ENCODE measurements at regions of chr3 and their contacts with region 1.

Region 1: GRCh38 chr3:43162230-43163084 is 56.6 kb upstream of the POMGNT2 start:
- DNase-seq: no peak
- ATAC-seq: no peak

Region 2: DNA sequence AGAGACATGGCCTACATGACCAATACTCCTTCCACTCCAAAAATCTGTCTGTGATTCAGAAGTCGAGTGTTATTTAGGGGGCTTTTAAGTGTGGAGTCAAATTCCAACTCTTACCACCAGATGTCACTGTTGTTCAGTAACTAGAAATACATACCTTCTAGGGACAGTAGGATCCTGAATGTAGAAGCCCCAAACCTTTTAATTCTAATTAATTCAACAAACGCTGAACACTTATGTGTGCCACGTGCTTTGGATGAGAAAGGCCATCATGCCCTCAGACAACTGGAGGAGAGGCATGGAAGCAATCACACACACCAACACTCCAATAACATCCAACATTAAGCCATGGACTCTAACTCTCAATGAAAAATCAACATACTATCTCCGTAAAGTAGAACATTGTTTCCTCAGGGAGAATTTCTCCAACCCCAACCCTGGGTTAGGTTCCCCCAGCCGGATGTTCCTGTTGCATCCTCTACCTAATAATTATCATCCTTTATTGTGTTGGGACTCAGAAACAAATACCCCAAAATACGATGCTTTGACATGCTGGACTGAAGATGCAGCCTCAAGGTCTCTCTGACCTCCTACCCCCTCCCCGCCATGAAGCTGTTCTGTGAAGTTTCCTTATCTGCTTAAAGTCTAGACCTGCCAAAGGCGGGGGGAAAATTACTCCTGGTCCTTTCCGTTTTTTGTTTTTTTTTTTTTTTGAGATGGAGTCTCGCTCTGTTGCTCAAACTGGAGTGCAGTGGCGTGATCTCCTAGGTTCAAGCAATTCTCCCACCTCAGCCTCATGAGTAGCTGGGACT is 381.4 kb before region 1 on chr3:
- intact Hi-C with region 1: no loop called
- DNase-seq: no peak
- ATAC-seq: peak; percentile 64

Region 3: DNA sequence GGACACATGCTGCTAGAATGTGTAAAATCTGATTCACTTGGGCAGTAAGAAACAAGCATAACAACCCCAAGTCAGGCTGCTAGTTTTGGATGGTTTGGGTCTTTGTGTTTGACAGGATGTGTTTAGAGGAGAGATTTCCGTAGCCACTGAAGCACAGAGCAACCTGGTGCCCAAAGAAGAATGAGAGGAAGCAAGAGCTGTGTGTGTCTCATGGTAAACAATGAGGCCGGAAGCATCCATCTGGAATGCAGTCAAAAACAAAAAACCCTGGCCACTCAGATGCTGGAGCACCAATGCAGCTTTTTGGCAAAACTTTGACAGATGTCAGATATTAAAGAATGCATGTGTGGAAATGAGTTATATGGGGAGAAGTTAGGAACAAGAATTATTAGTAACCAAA is 84.5 kb after region 1 on chr3:
- intact Hi-C with region 1: loop called (anchors 10 kb)
- DNase-seq: no peak
- ATAC-seq: no peak

Region 4: DNA sequence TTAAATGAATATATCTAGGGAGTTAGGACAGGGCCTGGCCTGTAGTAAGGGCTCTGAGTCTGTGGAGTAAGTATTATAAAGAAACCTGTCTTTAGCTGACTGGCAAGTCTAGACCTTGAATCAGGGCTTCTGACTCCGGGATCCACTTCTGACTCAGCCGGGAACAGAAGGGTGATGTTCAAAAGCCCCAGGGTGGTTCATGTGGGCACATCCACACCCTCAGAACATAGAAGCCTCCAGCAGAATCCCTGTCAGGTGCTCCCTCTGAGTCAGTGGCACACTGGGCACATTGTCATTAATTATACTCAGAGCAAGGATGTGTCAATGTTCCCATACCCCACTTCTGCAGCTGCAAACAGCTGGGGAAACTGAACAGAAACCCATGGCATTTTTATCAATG is 97.2 kb after region 1 on chr3:
- intact Hi-C with region 1: no loop called
- DNase-seq: no peak
- ATAC-seq: no peak